ENCODE measurements at regions of chr16 and their contacts with region 1.

Region 1: GRCh38 chr16:11105038-11105903 is 150.7 kb downstream of the SOCS1 start:
- DNase-seq: peak; percentile 56
- ATAC-seq: peak; percentile 62 to 69

Region 2: GRCh38 chr16:10964039-10964890 is 141.0 kb before region 1 on chr16:
- intact Hi-C with region 1: loop called in 1 of 2 experiments (anchors 10 kb)
- DNase-seq: peak; percentile 82
- ATAC-seq: peak; percentile 80 to 89

Region 3: GRCh38 chr16:11133344-11133943 is 28.2 kb after region 1 on chr16:
- intact Hi-C with region 1: loop called in 1 of 2 experiments (anchors 5 kb)
- DNase-seq: peak; percentile 85
- ATAC-seq: peak; percentile 66 to 81

Region 4: GRCh38 chr16:11248133-11248532 is 142.9 kb after region 1 on chr16:
- intact Hi-C with region 1: loop called in 1 of 2 experiments (anchors 5 kb)
- DNase-seq: no peak
- ATAC-seq: no peak